OCI-LY7 (cell line): ENCODE measurements at regions of chr14 and their contacts with region 1.

Region 1: DNA sequence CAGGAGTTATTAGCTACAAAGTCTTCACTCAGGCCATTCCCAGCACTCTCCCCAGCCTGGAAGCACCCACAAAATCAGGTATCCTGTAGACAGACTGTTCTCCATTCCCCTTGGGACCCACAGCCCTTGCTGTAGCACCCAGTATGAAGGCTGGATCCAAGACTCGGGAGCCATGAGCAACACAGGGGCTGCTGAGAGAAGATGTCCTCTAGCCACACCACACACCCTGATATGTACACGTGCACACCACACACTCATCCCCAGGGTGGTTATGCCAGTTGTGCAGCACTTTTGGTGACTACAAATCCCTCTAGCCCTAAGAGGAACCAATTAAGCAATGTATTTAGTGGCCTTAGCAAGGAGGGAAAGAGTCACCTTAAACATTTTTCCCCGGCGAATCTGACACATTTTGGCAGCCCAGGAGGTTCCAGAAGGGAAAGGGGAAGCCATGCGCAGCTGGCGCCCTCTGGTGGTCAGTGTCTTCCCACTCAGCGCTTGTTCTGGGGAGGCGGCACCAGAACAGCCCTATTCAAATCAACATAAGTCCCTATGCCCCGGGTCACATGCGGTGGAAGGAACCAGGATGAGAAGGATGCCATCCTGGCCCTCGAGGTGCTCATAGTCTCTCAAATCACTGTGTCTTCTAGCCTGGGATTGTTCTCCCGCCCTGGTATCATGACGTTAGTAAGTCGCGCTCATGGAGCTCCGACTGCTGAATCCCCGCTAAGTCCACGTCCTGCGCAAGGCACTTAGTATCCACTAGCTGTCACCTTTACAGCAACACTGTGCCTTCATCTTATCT is 96.9 kb downstream of the GCH1 start:
- DNase-seq: peak; percentile 75
- H3K4me3 ChIP-seq: no peak overlapping the region
- H3K27ac ChIP-seq: no peak overlapping the region
- H3K4me1 ChIP-seq: no peaks in the 10 kb centered on the region
- CTCF ChIP-seq: peak; percentile 93

Region 2: GRCh38 chr14:54652188-54652587 is 153.5 kb before region 1 on chr14:
- CTCF ChIA-PET with region 1: no interaction called
- POLR2A ChIA-PET with region 1: no interaction called
- intact Hi-C with region 1: no loop called
- DNase-seq: no peak
- H3K4me3 ChIP-seq: no peak overlapping the region
- H3K27ac ChIP-seq: no peak overlapping the region
- H3K4me1 ChIP-seq: no peaks in the 10 kb centered on the region
- CTCF ChIP-seq: no peak

Region 3: DNA sequence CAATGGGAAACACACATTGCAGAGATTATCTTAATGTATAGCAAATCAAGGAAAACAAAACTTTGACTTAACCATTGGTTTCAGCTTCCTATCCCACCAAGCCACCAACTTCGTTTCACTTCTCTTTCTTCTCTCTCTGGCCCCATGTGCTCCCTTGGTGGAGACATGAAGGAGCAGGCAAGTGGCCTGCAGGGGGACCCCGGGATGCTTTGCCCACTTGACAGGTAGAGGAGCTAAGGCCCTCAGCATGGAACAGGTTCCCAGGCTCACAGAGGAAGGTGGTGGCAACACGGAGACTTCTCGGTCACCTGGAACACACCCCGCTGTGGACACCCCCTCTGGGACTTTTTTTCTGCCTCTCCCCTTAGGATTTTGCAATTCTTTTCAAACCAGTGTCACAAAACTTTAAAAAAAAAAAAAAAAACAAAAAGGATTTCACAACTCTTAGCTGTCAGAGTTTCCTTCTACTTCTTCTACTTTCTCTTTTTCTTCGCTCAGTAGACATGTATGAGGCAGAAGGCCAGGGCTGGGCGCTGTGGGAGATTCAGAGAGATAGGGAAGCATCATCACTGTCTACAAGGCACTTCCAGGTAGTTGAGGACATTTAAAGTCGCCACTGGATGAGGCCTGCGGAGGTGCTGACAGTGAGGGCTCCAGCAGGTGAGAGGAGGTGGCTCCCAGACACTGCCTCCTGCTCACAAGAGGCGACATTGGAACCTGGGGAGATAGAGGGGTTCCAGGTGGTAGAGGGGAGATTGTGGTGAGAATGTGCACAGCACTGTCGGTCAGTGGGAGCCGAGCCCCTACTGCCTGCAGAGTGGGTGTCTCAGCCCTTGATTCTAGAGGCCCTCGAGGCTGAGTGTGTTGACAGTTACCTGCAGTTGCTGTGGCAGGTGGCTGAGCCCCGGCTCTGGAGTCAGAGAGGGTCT is 22.7 kb before region 1 on chr14:
- CTCF ChIA-PET with region 1: interaction called, 3 read pairs
- POLR2A ChIA-PET with region 1: no interaction called
- intact Hi-C with region 1: loop called (anchors 1 kb)
- DNase-seq: peak; percentile 77
- H3K4me3 ChIP-seq: no peak overlapping the region
- H3K27ac ChIP-seq: no peak overlapping the region
- H3K4me1 ChIP-seq: peaks cover 26% of the 10 kb centered on the region
- CTCF ChIP-seq: peak; percentile 77